ENCODE measurements at regions of chr12 and their contacts with region 1.

Region 1: DNA sequence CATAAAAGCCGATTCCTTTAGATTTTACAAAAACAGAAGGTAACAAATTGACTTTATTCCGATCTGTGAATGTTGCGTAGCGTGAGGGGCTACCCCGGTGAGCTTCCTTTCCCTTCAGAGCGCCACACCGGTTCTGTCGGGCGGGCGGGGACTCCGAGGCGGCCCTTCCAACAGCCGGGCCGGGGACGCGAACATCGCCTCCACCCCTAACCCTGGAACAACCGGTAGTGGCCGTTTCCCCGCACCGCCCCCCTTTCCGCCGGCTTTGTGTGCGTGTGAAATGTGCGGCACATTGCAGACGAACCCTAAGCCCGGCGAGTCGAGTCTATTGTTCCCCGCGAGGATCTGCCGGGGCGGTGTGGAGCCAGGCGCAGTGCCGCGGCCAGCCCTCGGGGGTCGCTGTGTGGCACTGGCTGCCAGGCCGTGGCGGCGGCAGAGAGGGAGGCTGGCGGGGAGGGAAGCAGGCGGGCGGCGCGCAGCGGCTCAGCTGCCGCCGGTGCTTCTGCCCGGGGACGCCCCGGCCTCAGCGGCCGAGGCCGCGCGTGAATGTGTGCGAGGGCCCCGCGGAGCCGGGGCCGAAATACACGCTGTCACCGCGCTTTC is 775 bp upstream of the ARID2 start:
- DNase-seq: peak; percentile 94
- H3K4me3 ChIP-seq: peak overlapping the region; percentile 80 to 87
- H3K27ac ChIP-seq: peak overlapping the region; percentile 99 to 100
- H3K4me1 ChIP-seq: no peaks in the 10 kb centered on the region
- H3K27me3 ChIP-seq: no peaks in the 10 kb centered on the region
- CTCF ChIP-seq: peak; percentile 85 to 98 (median 96)
- POLR2A ChIP-seq: peak; percentile 83

Region 2: DNA sequence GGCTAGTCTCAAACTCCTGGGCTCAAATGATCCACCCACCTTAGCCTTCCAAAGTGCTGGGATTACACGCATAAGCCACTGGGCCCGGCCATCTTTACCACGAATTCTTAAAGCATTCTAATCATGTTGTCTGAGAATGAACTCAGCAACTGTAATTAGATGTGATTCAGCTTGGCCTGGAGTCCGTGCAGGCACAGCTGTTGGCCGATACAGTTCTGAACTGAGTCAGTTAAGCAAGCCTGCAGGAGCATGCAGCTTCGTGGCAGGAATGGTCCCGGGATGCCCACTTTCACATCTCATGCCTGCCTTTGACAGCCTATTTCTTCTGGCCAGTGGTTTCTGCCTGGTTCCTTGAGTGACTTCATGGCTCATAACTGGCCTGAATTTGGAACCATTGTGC is 318.8 kb before region 1 on chr12:
- intact Hi-C with region 1: loop called (anchors 5 kb)
- DNase-seq: no peak
- H3K4me3 ChIP-seq: no peak overlapping the region
- H3K27ac ChIP-seq: no peak overlapping the region
- H3K4me1 ChIP-seq: no peaks in the 10 kb centered on the region
- H3K27me3 ChIP-seq: no peaks in the 10 kb centered on the region
- CTCF ChIP-seq: no peak
- POLR2A ChIP-seq: no peak

Region 3: DNA sequence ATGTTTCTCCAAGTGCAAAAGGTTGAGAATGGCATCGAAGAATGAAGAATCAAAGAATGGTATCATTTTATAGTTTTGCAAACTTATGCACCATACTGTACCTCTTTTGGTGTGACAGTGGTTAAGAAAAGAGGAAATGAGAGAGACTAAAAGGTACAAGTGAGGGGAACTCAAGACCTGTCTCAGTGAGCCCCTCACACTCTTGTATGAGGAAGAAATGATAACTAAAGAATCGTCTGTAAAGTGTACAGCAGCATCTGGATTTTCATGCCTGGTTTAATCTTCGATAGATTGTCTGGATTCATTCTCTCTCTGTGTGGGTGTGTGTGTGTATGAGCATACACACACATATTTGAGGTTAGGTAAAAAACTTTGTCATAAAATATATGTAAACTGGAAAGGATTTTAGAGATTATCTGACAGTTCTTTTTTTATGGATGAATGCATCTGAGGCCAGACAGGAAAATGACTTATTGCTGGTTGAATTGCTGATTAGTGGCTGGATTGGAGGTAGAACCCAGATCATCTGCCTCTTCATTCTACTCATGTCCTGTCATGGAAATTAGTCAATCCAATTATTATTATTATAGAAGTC is 659.8 kb after region 1 on chr12:
- intact Hi-C with region 1: no loop called
- DNase-seq: no peak
- H3K4me3 ChIP-seq: no peak overlapping the region
- H3K27ac ChIP-seq: peak overlapping the region in 1 of 2 donors; percentile 2
- H3K4me1 ChIP-seq: peaks cover 5% of the 10 kb centered on the region
- H3K27me3 ChIP-seq: no peaks in the 10 kb centered on the region
- CTCF ChIP-seq: no peak
- POLR2A ChIP-seq: no peak